ENCODE measurements at regions of chr11 and their contacts with region 1.

Region 1: GRCh38 chr11:2196970-2197770 is 25.6 kb upstream of the TH start:
- DNase-seq: peak; percentile 68
- H3K4me3 ChIP-seq: no peak overlapping the region
- H3K27ac ChIP-seq: no peak overlapping the region
- H3K4me1 ChIP-seq: peaks cover 9% of the 10 kb centered on the region
- H3K27me3 ChIP-seq: peaks cover 35% of the 10 kb centered on the region
- CTCF ChIP-seq: peak; percentile 82

Region 2: DNA sequence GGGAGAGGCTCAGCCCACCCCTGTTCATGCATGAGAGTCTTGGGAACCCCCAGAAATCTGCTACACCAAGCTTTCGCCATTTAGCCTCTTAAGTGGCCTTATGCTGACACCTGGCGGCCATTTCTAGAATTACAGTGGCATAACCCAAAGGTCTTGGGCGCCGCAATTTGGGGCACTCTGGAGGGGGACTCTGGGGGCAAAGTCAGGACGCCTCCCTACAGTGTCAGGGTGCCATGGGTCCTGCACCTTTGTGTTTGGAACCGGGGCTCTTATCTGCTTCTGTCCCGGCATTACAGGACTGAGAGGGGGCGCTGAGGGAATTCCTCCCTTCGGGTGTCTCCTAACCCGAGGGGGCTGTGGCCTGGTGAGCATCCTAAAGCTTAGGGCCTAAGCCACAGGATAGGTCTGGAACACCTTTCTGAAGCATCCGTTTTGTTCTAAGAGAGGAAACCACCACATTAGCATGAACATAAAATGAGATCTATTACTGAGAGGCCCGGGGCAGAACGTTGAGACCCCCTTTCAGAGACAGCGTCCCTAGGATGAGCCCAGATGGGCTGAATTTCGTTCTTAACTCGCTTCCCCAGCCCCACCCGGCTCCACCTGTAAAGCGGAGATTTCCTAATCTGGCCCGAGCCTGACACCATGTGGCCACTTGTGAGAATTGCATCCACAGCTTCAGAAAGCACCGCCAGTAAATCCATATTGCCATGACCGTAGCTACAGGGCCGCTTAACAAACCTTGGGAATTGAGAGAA is 45.5 kb before region 1 on chr11:
- intact Hi-C with region 1: no loop called
- DNase-seq: peak; percentile 67
- H3K4me3 ChIP-seq: peak overlapping the region; percentile 33
- H3K27ac ChIP-seq: peak overlapping the region; percentile 18
- H3K4me1 ChIP-seq: peaks cover 12% of the 10 kb centered on the region
- H3K27me3 ChIP-seq: peaks cover 66% of the 10 kb centered on the region
- CTCF ChIP-seq: peak; percentile 74

Region 3: DNA sequence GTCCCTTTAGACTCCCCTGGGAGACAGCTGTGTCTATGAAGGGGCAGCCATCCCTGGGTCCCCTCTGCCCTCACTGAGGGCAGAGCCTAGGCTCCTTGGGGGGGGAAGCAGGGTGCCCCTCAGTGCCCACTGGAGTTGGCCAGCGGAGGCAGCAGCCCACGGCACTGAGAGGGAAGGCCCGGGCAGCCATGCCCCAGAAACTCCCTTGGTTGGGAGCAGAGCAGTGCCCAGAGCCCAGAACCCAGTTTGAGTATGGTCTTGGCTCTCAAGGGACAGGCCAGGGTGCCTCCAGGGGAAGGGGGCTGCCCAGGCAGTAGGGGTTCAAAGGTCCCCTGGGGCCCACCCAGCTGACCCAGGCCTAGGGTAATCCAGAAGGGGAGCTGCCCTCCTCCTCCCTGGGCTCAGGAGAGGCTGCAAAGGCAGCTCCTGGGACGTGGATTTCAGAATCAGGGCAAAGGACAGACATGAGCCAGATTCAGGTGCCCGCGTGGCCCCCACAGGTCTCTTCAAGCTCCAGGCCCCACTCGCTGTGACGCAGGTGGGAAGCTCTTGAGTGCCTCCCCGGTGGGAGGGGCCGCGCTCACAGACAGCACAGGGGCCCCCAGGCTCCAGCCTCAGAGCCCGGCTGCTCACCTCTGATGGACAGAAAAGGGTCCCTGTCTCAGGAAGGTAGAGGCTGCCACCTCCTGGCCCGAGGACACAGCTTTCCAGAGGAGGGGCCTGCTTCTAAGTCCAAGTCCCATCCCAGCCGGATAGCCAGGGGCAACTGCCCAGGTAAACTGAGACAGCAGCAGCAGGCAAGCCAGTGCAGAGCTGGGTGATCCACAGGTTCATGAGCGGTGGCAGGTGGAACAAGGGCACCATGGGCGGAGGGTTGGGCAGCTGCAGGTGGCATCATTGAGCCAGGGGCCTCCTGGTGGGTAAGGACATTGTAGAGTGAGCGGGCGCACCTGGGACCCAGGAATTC is 101.9 kb after region 1 on chr11:
- intact Hi-C with region 1: loop called (anchors 10 kb)
- DNase-seq: no peak
- H3K4me3 ChIP-seq: peak overlapping the region; percentile 34
- H3K27ac ChIP-seq: peak overlapping the region; percentile 30
- H3K4me1 ChIP-seq: peaks cover 36% of the 10 kb centered on the region
- H3K27me3 ChIP-seq: no peaks in the 10 kb centered on the region
- CTCF ChIP-seq: peak; percentile 41

Measured in left ventricle myocardium inferior (tissue), 1 donor.